Body of pancreas (tissue), 4 donors: ENCODE measurements at regions of chr2 and their contacts with region 1.

Region 1: GRCh38 chr2:62698653-62699052 is 6.9 kb upstream of the EHBP1 start:
- DNase-seq: no peak
- ATAC-seq: no peak
- H3K4me3 ChIP-seq: no peak overlapping the region
- H3K27ac ChIP-seq: no peak overlapping the region
- H3K4me1 ChIP-seq: no peaks in the 10 kb centered on the region
- H3K27me3 ChIP-seq: no peaks in the 10 kb centered on the region
- CTCF ChIP-seq: no peak
- POLR2A ChIP-seq: no peak

Region 2: GRCh38 chr2:62475172-62476011 is 223.3 kb before region 1 on chr2:
- intact Hi-C with region 1: loop called (anchors 10 kb)
- DNase-seq: peak; percentile 33 to 52 (median 46)
- ATAC-seq: peak; percentile 71
- H3K4me3 ChIP-seq: no peak overlapping the region
- H3K27ac ChIP-seq: peak overlapping the region in 3 of 4 donors; percentile 44 to 60 (median 57)
- H3K4me1 ChIP-seq: peaks cover 28% of the 10 kb centered on the region
- H3K27me3 ChIP-seq: no peaks in the 10 kb centered on the region
- CTCF ChIP-seq: no peak
- POLR2A ChIP-seq: no peak